GM10248 (cell line): ENCODE measurements at regions of chr2 and their contacts with region 1.

Region 1: GRCh38 chr2:68121873-68122679 is 35.6 kb upstream of the PNO1 start:
- DNase-seq: peak; percentile 58
- CTCF ChIP-seq: peak; percentile 96

Region 2: GRCh38 chr2:67684991-67685390 is 437.1 kb before region 1 on chr2:
- CTCF ChIA-PET with region 1: no interaction called
- POLR2A ChIA-PET with region 1: no interaction called
- DNase-seq: no peak
- CTCF ChIP-seq: no peak

Region 3: DNA sequence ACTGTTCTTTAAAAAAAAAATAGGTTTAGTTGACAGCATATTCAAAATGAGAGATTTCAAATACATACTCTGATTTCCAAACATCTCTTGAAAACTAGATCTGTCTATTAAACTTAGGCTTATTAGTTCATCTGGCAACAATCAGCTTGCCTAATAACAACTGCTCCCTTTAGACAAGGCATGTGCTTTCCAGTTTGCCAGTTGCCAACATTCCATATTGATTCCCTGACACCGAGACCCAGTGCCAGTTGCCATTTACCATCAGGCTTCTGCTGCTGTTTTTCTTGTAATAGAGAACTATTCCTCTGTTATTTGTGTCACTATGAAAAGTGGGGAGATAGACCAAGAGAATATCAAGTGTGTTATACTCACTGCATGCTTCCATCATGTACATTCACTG is 315.3 kb before region 1 on chr2:
- CTCF ChIA-PET with region 1: no interaction called
- POLR2A ChIA-PET with region 1: no interaction called
- DNase-seq: no peak
- CTCF ChIP-seq: no peak

Region 4: GRCh38 chr2:68110102-68110501 is 12.0 kb before region 1 on chr2:
- CTCF ChIA-PET with region 1: interaction called, 18 read pairs
- POLR2A ChIA-PET with region 1: no interaction called
- DNase-seq: no peak
- CTCF ChIP-seq: no peak

Region 5: DNA sequence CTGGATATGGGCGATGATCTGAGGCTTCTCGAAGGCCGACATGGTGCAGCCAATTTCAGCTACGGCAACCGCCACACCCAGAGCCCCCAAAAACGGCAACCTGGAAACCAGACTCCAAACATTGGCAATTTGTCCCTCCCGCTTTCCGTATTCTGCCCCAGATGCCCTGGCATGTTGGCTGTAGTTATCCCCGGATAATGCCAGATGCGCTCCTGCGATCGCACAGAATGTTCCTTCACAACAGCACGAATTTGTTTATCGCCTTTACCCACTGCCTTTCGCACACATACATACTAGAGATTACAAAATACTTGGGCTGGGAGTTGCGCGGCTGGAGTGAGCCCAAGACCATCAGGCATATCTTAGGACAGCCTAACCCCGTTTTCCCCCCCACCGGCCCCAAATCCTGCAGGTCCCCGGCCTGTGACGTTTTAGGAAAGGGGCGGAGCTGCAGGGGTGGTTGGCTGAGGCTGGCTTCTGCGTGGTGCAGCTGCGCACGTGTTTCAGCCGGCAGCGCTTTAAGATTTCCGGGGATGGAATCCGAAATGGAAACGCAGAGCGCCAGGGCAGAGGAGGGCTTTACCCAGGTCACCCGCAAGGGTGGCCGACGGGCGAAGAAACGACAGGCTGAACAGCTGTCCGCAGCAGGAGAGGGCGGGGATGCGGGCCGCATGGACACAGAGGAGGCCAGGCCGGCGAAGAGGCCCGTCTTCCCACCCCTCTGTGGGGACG is 35.5 kb after region 1 on chr2 and contains the start of gene PNO1:
- CTCF ChIA-PET with region 1: interaction called, 16 read pairs
- POLR2A ChIA-PET with region 1: no interaction called
- DNase-seq: peak; percentile 97
- CTCF ChIP-seq: no peak

Region 6: GRCh38 chr2:68185541-68186164 is 63.6 kb after region 1 on chr2:
- CTCF ChIA-PET with region 1: interaction called, 14 read pairs
- POLR2A ChIA-PET with region 1: no interaction called
- DNase-seq: peak; percentile 31
- CTCF ChIP-seq: peak; percentile 54

Region 7: DNA sequence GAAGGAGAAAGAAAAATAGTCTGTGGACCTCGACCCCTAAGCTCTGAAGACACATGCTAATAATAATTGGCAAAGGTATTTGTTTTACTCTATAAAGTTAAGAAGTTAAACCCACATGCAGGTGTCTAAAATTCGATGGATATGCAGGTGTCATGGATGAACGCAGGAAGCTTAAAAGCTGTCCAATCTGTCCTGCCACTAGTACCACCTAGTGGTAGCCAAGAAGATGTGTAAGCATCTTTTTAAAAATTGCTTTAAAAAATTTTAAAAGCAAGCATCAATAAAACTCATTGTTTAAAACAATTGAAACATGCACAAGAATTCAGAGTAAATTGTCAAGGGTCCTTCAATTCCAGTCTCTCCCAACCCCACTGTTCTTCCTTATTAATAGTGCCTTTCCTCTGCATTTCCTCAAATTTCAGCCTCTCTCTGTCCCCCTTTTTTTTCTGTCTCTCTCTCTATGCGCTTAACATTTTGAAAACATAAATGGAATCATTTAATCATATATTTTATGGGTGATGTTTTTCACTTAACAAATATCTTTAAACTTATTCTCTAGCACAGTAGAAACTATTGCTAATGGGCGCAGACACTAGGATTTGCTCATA is 160.8 kb after region 1 on chr2:
- CTCF ChIA-PET with region 1: interaction called, 34 read pairs
- POLR2A ChIA-PET with region 1: no interaction called
- DNase-seq: peak; percentile 67
- CTCF ChIP-seq: peak; percentile 66

Region 8: GRCh38 chr2:68441179-68441993 is 319.3 kb after region 1 on chr2:
- CTCF ChIA-PET with region 1: interaction called, 27 read pairs
- POLR2A ChIA-PET with region 1: no interaction called
- DNase-seq: peak; percentile 78
- CTCF ChIP-seq: peak; percentile 82